ENCODE measurements at regions of chr17 and their contacts with region 1.

Region 1: DNA sequence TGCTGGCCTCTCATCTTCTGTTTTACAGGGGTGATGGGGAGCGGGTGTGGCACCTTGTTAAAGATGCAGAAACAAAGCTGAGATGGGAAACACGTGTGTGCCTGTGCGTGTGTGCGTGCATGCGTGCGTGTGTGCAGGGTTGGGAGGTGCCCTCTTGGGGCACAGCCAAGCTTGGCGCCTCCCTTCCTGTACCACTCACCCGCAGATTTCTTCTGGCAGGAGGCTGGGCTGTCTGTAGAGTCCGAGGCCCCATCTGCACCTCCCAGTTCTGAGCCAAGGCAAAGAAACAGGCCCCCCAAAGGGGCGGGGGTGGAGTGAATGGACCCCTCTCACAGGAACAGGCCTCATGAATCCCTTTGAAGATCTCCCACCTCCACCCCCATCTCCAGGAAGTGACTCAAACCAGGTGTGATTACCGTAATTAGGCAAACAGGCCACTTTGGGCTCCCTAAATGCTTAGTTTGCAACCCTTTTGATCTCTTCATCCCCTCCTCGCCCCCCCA is 20.9 kb downstream of the TNS4 start:
- DNase-seq: peak; percentile 76
- H3K4me3 Mint-ChIP-seq: peak overlapping the region; percentile 84
- H3K27ac Mint-ChIP-seq: peak overlapping the region; percentile 99
- H3K4me1 Mint-ChIP-seq: peaks cover 84% of the 10 kb centered on the region
- H3K27me3 Mint-ChIP-seq: no peaks in the 10 kb centered on the region

Region 2: DNA sequence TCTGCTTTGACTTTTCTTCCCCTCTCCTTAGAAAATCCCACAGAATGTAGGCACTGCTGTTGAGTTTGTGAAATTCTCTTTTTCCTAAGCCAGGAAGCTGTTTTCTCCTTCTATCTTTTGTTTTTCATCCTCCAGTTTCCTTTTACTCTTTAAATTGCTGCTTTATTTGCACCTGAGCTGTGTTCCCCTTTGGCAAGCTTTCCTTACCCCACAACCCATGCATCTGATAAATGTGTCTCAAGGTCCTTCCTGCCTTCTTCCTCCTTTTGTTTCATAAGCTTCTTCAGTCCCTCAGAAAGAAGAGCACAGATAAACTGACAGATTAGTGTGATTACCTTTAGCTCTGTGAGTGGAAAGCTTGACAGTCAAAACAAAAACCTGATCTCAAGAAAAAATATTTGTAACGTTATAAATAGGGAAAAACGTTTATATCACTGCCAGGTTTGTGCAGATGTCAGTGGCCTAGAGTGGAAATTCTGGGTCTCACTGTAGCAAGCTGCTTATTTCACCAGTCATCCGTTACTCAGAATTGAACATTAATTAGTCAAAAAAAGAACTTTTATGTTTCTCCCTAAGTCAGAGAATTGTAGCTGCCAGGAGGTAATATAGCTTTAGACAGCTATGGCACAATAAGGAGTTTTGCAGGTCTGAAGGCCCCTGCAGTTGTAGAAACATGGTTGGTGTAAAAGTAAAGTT is 585.7 kb before region 1 on chr17:
- intact Hi-C with region 1: no loop called
- DNase-seq: no peak
- H3K4me3 Mint-ChIP-seq: no peak overlapping the region
- H3K27ac Mint-ChIP-seq: peak overlapping the region; percentile 18
- H3K4me1 Mint-ChIP-seq: peaks cover 11% of the 10 kb centered on the region
- H3K27me3 Mint-ChIP-seq: peaks cover 4% of the 10 kb centered on the region

Region 3: DNA sequence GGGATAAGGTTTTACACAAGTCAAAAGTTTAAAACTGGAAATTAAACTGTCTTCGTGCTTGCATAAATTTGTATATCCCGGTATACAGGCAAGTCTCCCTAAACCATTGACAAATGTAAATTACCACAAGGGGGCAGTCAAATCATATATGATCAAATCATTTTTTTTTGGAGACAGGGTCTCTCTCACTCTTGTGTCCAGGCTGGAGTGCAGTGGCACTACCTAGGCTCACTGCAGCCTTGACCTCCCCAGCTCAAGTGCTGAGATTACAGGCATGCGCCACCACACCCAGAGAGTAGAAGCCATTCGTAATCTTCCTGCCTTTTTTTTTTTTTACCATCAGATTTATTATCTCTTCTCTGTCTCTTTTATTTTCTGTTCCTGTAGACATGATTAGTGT is 81.4 kb before region 1 on chr17:
- intact Hi-C with region 1: loop called (anchors 5 kb)
- DNase-seq: no peak
- H3K4me3 Mint-ChIP-seq: no peak overlapping the region
- H3K27ac Mint-ChIP-seq: no peak overlapping the region
- H3K4me1 Mint-ChIP-seq: peaks cover 42% of the 10 kb centered on the region
- H3K27me3 Mint-ChIP-seq: no peaks in the 10 kb centered on the region

Region 4: DNA sequence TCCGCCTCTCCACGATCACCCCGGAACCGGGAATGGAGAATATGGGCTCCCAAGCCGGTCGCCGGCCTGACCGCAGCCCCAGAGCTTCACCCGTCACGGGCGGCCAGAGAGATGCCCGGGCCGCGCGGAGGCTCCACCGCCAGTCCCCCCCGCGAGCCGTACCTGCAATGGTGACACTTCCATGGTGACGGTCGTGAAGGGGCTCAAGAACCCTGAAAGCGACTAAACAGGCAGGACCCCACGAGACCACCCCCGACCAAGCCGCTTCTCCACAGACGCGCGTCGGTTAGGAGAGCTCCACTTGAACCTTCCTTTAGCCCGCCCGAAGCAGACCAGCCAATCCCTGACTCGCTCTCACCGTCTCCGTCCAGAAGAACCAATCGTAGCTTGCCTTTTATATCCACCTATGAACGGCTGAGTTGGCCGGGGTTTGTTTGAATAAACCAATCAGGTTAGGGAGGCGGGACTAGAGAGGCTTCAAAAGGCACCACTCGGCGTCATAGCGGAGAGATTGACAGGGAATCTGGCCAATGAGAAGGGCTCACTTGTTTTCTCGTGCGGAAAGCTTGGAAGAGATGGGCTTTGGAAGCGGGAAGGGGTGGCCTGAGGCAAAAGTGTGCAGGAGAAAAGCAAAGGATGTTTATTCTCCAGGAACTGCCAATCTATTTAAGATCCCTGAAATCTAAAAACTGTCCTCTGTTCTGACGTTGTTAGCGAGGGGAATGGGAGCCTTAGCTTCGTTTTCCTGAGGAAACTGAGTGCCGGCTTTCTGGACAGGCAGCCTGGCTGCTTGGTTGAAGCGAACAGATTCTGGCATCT is 62.7 kb before region 1 on chr17 and contains the start of gene TOP2A:
- intact Hi-C with region 1: loop called (anchors 2 kb)
- DNase-seq: peak; percentile 97
- H3K4me3 Mint-ChIP-seq: peak within 1 kb of the TSS; percentile 96
- H3K27ac Mint-ChIP-seq: peak within 1 kb of the TSS; percentile 92
- H3K4me1 Mint-ChIP-seq: peaks cover 35% of the 10 kb centered on the region
- H3K27me3 Mint-ChIP-seq: peaks cover 2% of the 10 kb centered on the region
- total RNA-seq, gene TOP2A: 161 and 174 TPM in 2 replicates

Region 5: DNA sequence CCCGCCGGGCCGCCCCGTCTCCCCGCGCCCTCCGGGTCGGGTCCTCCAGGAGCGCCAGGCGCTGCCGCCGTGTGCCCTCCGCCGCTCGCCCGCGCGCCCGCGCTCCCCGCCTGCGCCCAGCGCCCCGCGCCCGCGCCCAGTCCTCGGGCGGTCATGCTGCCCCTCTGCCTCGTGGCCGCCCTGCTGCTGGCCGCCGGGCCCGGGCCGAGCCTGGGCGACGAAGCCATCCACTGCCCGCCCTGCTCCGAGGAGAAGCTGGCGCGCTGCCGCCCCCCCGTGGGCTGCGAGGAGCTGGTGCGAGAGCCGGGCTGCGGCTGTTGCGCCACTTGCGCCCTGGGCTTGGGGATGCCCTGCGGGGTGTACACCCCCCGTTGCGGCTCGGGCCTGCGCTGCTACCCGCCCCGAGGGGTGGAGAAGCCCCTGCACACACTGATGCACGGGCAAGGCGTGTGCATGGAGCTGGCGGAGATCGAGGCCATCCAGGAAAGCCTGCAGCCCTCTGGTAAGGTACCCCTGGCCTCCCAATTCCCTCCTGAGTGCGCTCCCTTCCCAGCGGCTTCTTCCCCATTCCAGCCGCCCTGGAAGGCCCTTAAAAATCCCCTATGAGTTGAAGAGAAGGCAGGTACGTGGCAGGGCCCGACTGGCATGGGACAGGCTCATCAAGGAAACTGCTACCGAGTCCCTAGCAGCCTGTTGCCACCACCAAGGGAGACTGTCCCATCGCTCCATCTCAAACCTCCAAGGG is 36.8 kb before region 1 on chr17:
- intact Hi-C with region 1: loop called (anchors 1 kb)
- DNase-seq: peak; percentile 63
- H3K4me3 Mint-ChIP-seq: peak overlapping the region; percentile 80
- H3K27ac Mint-ChIP-seq: peak overlapping the region; percentile 90
- H3K4me1 Mint-ChIP-seq: peaks cover 65% of the 10 kb centered on the region
- H3K27me3 Mint-ChIP-seq: peaks cover 7% of the 10 kb centered on the region

Region 6: DNA sequence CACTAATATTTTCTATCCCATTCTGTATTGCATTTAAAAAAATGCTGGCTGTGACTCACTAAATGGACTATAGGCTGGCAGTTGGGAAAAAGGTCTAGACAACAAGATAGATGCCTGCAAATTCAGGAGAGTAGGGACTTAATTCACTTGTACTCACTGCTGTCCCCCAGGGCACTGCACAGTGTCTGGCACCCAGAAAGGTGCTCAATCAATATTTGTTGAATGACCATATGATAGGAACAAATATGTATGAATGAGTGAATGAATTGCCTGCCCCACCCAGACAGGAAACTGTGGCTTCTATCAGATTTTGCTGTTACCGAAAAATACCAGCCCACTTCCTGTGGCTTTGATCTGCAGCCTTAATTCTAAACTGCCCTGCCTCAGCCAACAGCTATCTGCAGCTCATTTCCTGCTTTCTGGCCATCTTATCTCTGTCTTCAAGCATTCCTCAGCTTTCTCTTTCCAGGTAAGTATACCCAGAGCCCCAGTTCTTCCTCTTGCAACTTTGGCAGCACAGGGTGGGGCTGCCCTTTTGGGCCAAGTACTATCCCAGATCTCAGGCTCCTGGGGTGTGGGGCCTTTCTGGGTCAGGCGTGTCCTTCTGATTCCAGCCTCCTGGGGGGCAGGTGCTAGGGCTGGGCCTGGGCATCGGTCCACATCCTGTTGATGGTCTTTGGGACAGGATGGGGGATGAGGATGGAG is 36.2 kb after region 1 on chr17:
- intact Hi-C with region 1: loop called (anchors 1 kb)
- DNase-seq: peak; percentile 78
- H3K4me3 Mint-ChIP-seq: peak overlapping the region; percentile 84
- H3K27ac Mint-ChIP-seq: peak overlapping the region; percentile 97
- H3K4me1 Mint-ChIP-seq: peaks cover 79% of the 10 kb centered on the region
- H3K27me3 Mint-ChIP-seq: no peaks in the 10 kb centered on the region

Region 7: DNA sequence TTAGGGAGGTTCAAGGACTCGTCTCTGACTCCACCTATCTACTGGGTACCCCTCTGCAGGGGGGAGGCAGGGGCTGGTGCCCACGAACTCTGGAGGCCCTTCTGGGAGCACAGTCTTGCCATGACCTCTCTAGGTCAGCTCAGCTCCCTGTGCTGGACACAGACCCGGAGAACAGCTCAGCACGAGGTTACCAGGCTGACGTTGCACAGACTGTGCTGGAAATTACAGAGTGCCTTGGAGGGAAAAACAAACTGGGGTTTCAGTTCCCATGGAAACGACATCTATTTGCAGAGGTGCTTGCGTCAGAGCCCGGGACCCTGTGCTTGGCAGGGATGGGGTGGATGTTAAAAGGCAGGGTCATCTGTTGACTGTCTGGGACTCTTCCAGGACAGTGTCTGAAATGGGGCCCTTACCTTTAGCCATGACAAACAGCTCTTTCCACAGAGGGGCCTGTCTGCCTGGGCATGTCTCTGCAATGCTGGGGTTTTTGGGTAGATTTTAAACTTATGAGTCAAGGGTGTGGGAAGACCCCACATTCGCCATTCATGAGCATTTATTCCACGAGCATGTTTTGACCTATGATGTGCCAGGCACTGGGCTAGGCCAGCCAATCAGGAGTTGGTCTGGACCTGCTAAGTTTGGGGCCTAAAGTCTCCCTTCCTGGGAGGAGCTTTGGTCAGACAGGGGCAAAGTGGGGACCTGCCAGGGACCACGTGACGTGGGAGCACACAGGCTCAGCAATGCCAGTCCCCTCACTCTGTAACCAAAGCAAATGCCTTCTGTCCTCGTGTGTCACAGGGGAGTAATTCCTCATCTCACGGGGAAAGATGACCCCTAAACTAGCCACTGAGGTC is 62.2 kb after region 1 on chr17:
- intact Hi-C with region 1: loop called (anchors 2 kb)
- DNase-seq: no peak
- H3K4me3 Mint-ChIP-seq: peak overlapping the region; percentile 69
- H3K27ac Mint-ChIP-seq: peak overlapping the region; percentile 88
- H3K4me1 Mint-ChIP-seq: peaks cover 75% of the 10 kb centered on the region
- H3K27me3 Mint-ChIP-seq: peaks cover 10% of the 10 kb centered on the region

Region 8: DNA sequence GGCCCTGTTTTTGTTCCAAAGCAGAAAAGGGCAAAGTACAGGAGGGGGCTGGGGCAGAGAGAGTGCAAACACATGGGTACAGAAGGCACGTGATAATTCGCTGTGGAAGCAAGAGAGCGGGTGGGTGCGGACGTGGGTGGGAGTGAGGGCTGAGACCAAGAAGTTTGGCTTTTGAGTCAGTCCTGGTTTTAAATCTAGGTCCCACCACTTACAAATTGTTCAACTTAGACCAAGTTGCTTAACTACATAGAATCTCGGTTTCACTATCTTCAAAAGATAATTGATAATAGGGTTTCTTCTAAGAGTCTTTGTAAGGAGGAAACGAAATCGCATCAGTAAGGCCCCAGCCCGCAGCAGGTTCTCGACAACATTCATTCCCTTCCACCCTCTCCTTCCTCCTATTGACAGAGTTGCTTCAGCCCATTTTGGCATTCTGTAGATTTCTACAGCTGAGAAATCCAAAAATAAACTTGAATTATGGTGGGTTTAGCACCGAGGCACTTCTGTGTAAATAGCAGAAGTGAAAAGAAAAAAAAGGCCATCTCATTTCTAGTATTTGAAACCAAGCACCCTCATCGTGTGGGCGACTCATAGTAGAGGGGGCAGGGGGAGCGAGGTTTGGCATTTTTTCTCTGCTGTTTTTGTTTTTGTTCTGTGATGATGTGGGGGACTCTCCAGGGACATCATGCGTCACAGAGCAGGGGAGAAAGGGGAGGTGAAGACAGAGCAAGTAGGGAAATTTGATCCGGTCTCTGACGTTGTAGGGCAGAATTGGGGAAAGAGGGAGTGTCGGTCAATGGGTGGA is 118.3 kb after region 1 on chr17:
- intact Hi-C with region 1: loop called (anchors 1 kb)
- DNase-seq: peak; percentile 56
- H3K4me3 Mint-ChIP-seq: peak overlapping the region; percentile 46
- H3K27ac Mint-ChIP-seq: peak overlapping the region; percentile 89
- H3K4me1 Mint-ChIP-seq: peaks cover 87% of the 10 kb centered on the region
- H3K27me3 Mint-ChIP-seq: no peaks in the 10 kb centered on the region

Measured in activated T-helper 1 cell treated with anti-CD3 and anti-CD28 coated beads, Interleukin-12 subunit alpha, Interleukin-12 subunit beta, Interleukin-2, Interleukin-4 antibody, amounts not matched to agents 30 ng/mL and 10 ng/mL and 1 ng/mL, durations not matched to agents 14 hours and 24 hours and 36 hours (primary cell).